Activated CD4-positive, alpha-beta memory T cell treated with anti-CD3 and anti-CD28 coated beads, Interleukin-2, amount 10 ng/mL, durations not matched to agents 7 days and 5 days (primary cell): ENCODE measurements at regions of chr7 and their contacts with region 1.

Region 1: DNA sequence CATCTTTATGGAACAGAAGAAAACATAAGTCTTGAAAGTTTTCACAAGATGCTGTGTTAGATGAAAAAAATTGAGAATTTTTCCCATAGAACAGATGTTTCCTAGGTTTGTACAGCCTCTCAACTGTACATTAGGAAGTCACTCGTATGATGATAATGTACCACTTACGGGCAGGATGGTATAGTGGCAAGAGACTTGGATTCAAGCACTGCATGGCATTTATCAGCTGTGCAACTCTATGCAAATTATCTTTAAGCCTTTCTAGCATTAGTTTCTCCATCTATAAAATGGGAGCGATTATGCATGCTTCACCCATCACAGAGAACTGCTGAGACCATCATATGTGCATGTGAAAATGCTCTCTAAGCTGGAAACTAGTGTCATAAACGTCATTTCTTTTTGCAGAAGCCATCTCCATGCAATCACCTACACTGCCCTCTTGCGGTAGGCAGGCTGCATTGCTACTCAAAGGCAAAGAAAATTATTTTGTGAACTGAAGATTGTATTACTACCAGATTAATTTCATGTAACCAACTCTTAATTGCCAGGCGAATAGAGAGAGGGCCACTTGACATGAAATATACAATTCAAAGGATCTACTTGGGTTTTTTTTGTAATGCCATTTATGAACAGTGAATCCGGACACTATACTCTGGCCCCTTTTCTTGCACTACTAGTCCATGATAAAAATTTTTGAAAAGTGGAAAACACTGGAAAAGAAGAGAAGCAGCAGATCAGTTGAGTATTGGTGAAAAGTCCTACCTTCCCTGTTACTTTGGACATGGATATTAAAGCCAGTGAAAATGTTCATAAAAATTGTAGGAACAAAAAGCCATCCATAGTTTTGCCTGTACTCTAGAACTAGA is 102.3 kb downstream of the JAZF1 start:
- DNase-seq: peak; percentile 51
- H3K4me3 Mint-ChIP-seq: no peak overlapping the region
- H3K27ac Mint-ChIP-seq: no peak overlapping the region
- H3K4me1 Mint-ChIP-seq: no peaks in the 10 kb centered on the region
- H3K27me3 Mint-ChIP-seq: no peaks in the 10 kb centered on the region

Region 2: GRCh38 chr7:28096713-28097112 is 18.4 kb after region 1 on chr7:
- CTCF ChIA-PET with region 1: interaction called, 17 read pairs
- POLR2A ChIA-PET with region 1: interaction called, 3 read pairs
- DNase-seq: peak; percentile 19
- H3K4me3 Mint-ChIP-seq: no peak overlapping the region
- H3K27ac Mint-ChIP-seq: no peak overlapping the region
- H3K4me1 Mint-ChIP-seq: no peaks in the 10 kb centered on the region
- H3K27me3 Mint-ChIP-seq: no peaks in the 10 kb centered on the region